ENCODE measurements at regions of chr1 and their contacts with region 1.

Region 1: DNA sequence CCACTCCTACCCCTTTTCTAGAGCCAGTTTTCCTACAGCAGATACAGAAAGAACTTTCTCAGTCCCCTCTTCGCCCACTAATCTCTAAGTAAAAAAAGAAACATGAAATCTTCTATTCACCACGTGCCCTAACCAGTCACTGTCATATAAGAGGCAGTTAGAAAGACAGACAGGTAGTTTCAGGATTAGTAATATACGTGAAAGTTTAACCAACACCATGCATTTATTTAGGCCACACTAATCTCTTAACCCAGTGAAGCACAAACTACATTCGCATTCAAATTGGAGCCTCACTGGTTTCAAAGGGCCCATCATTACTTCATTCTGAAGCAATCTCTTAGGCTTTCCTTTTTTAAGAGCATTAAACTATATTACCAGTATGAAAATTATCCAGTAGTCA is 10.1 kb downstream of the GPATCH2 start:
- DNase-seq: no peak
- ATAC-seq: peak; percentile 97
- H3K4me3 Mint-ChIP-seq: no peak overlapping the region
- H3K27ac Mint-ChIP-seq: peak overlapping the region; percentile 64
- H3K4me1 Mint-ChIP-seq: peaks cover 34% of the 10 kb centered on the region
- H3K27me3 Mint-ChIP-seq: no peaks in the 10 kb centered on the region

Region 2: GRCh38 chr1:217164403-217164802 is 456.4 kb before region 1 on chr1:
- CTCF ChIA-PET with region 1: no interaction called
- POLR2A ChIA-PET with region 1: no interaction called
- intact Hi-C with region 1: no loop called
- DNase-seq: no peak
- ATAC-seq: no peak
- H3K4me3 Mint-ChIP-seq: no peak overlapping the region
- H3K27ac Mint-ChIP-seq: no peak overlapping the region
- H3K4me1 Mint-ChIP-seq: no peaks in the 10 kb centered on the region
- H3K27me3 Mint-ChIP-seq: no peaks in the 10 kb centered on the region

Region 3: DNA sequence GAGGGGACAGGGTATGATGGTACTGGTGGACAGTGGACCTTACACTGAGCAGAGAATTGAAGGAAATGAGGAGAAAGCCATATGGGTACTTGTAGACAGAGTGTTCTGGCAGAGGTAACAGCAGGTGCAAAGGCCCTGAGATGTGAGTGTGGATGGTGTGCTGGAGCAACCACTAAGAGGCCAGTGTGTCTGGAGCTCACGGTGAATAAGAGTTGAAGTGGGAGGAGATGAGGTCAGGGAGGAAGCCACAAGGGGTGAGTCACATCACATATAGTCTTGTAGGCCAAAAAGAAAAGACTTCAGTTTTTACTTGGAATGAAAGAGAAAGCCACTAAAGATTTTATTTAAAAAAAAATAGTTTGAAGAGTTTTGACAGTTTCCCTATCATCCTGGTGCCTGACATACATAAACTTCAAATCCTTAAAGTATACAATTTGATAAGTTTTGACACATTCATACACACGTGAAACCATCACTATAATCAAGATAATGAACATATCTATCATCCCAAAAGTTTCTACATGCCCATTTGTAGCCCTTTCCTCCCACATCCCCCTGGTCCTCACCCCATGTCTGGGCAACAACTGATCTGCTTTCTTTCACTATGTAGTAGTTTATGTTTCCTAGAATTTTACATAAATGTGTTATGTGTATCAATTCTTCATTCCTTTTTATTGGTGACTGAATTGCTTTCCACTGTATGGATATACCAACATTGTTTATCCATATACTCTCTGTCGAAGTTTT is 138.3 kb before region 1 on chr1:
- CTCF ChIA-PET with region 1: no interaction called
- POLR2A ChIA-PET with region 1: no interaction called
- intact Hi-C with region 1: loop called in 1 of 2 experiments (anchors 5 kb)
- DNase-seq: peak; percentile 83
- ATAC-seq: peak; percentile 100
- H3K4me3 Mint-ChIP-seq: no peak overlapping the region
- H3K27ac Mint-ChIP-seq: peak overlapping the region; percentile 74
- H3K4me1 Mint-ChIP-seq: peaks cover 25% of the 10 kb centered on the region
- H3K27me3 Mint-ChIP-seq: no peaks in the 10 kb centered on the region

Region 4: GRCh38 chr1:217630711-217631591 is 10.1 kb after region 1 on chr1 and contains the starts of genes GPATCH2 and SPATA17:
- CTCF ChIA-PET with region 1: interaction called, 4 read pairs
- POLR2A ChIA-PET with region 1: interaction called, 6 read pairs
- intact Hi-C with region 1: loop called in 1 of 2 experiments (anchors 1 kb)
- DNase-seq: peak; percentile 85
- ATAC-seq: peak; percentile 89
- H3K4me3 Mint-ChIP-seq: peak within 1 kb of the TSS; percentile 87
- H3K27ac Mint-ChIP-seq: peak within 1 kb of the TSS; percentile 100
- H3K4me1 Mint-ChIP-seq: peaks cover 34% of the 10 kb centered on the region
- H3K27me3 Mint-ChIP-seq: no peaks in the 10 kb centered on the region
- total RNA-seq, gene GPATCH2: 6.4 to 7.2 TPM
- total RNA-seq, gene SPATA17: 0.14 TPM in 1 of 2 experiments, not detected in the other